ENCODE measurements at regions of chr6 and their contacts with region 1.

Region 1: GRCh38 chr6:34650823-34651222 is 45.7 kb downstream of the ILRUN start:
- DNase-seq: no peak
- H3K4me3 ChIP-seq: no peak overlapping the region
- CTCF ChIP-seq: no peak

Region 2: DNA sequence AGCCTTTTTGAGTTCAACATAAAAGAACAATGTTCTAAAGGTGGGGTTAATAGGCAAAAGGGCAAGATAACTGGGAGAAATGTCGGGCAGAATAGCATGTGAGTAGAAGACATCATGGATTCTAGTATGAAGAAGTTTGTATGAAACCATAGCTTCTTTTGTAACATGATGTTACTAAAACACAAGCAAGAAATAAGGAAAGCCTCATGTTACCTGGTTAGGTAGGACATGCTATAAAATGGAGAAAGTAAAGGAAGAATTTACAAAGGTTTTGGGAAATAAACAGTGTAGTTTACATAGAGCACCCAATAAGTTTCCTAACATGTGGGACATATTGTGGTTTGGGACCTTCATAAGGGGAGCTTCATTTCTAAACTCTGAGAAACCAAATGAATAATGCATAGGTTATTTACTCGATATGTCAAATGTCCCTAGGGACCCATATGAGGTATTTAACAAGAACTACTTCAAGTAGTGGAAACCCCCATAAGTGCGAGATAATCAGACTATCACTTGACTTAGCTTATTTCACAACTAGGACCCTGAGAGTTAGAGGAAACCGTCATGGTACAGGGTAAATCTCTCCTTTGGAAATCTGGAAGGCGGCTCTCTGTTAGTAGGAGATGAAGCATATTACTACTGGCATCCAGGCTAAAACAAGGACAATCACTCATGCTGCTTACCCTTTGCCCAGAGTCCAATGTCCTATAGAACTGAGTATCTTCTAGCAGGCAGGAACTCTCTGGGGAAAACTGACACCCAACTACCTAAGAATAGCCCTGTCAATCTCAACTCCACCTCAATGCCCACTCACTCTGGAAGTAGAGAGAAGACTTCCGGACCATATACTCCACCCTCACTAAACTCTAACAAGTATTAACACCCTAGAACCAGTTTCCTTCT is 11.7 kb before region 1 on chr6:
- CTCF ChIA-PET with region 1: interaction called, 12 read pairs
- POLR2A ChIA-PET with region 1: no interaction called
- DNase-seq: no peak
- H3K4me3 ChIP-seq: no peak overlapping the region
- CTCF ChIP-seq: no peak

Measured in AG04449 (cell line).